Heart left ventricle (tissue), 16 donors: ENCODE measurements at regions of chr6 and their contacts with region 1.

Region 1: GRCh38 chr6:43129434-43130194 is 41.5 kb upstream of the SRF start:
- DNase-seq: peak in 1 of 5 donors; percentile 50
- ATAC-seq: peak; percentile 63 to 85 (median 77)
- H3K4me3 ChIP-seq: no peak overlapping the region
- H3K27ac ChIP-seq: no peak overlapping the region
- H3K4me1 ChIP-seq: peaks cover 0 to 10% (median 1%) of the 10 kb centered on the region in 12 donors
- H3K27me3 ChIP-seq: no peaks in the 10 kb centered on the region
- CTCF ChIP-seq: peak; percentile 17 to 60 (median 47)
- POLR2A ChIP-seq: no peak

Region 2: DNA sequence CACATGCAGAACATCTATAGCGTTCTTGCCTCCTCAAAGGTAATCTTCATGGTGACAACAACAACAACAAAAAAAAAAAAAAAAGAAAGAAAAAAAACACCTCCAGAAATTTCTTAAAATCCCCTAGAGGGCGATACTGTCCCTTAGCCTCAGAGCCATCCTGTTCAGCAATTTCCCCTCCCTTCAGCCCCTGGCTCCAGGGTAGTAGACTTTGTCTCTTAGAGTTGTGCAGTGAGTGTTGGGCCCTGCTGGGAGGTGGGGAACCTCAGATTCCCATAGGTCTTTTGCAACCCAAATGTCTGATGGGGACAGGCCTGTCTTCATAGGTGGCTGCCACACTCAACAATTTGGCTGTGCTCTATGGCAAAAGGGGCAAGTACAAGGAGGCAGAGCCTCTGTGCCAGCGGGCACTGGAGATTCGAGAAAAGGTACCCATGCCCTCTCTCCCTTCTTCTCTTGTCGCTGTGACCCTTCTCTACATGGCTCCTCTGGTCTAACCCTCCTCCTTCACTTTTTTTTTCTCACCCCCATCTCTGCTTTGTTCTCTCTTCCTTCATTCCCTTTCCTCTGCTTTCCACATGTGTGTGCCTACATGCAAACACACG is 59.5 kb before region 1 on chr6:
- intact Hi-C with region 1: loop called in 3 of 10 experiments (anchors 5 to 10 kb)
- DNase-seq: no peak
- ATAC-seq: no peak
- H3K4me3 ChIP-seq: no peak overlapping the region
- H3K27ac ChIP-seq: no peak overlapping the region
- H3K4me1 ChIP-seq: no peaks in the 10 kb centered on the region
- H3K27me3 ChIP-seq: no peaks in the 10 kb centered on the region
- CTCF ChIP-seq: peak in 9 of 12 donors; percentile 10 to 52 (median 39)
- POLR2A ChIP-seq: no peak

Region 3: GRCh38 chr6:43075670-43076463 is 53.7 kb before region 1 on chr6 and contains the start of gene PTK7:
- intact Hi-C with region 1: loop called in 3 of 10 experiments (anchors 5 to 10 kb)
- DNase-seq: peak in 3 of 5 donors; percentile 25 to 68 (median 46)
- ATAC-seq: peak; percentile 37 to 60 (median 47)
- H3K4me3 ChIP-seq: peak within 1 kb of the TSS; percentile 27 to 86 (median 58)
- H3K27ac ChIP-seq: no peak within 1 kb of the TSS
- H3K4me1 ChIP-seq: peaks cover 0 to 18% (median 5%) of the 10 kb centered on the region in 12 donors
- H3K27me3 ChIP-seq: peaks cover 0 to 22% (median 0%) of the 10 kb centered on the region in 9 donors
- CTCF ChIP-seq: no peak
- POLR2A ChIP-seq: no peak
- total RNA-seq, gene PTK7: 1.4 to 10.4 (median 1.9) TPM